Esophagus squamous epithelium (tissue), 5 donors: ENCODE measurements at regions of chr4 and their contacts with region 1.

Region 1: GRCh38 chr4:2761035-2761923 is 5.1 kb upstream of the TNIP2 start:
- DNase-seq: no peak
- H3K4me3 ChIP-seq: no peak overlapping the region
- H3K27ac ChIP-seq: peak overlapping the region in 1 of 4 donors; percentile 13
- H3K4me1 ChIP-seq: peaks cover 4 to 43% (median 18%) of the 10 kb centered on the region in 3 donors
- H3K27me3 ChIP-seq: no peaks in the 10 kb centered on the region
- CTCF ChIP-seq: peak in 2 of 6 experiments; percentile 9 to 38
- POLR2A ChIP-seq: no peak

Region 2: GRCh38 chr4:2837904-2838496 is 76.7 kb after region 1 on chr4:
- intact Hi-C with region 1: loop called (anchors 10 kb)
- DNase-seq: no peak
- H3K4me3 ChIP-seq: peak overlapping the region in 2 of 4 donors; percentile 13 to 15
- H3K27ac ChIP-seq: peak overlapping the region; percentile 56 to 72 (median 66)
- H3K4me1 ChIP-seq: peaks cover 10 to 53% (median 22%) of the 10 kb centered on the region in 3 donors
- H3K27me3 ChIP-seq: no peaks in the 10 kb centered on the region
- CTCF ChIP-seq: no peak
- POLR2A ChIP-seq: no peak

Region 3: GRCh38 chr4:2934813-2935761 is 173.8 kb after region 1 on chr4:
- intact Hi-C with region 1: loop called (anchors 5 kb)
- DNase-seq: peak; percentile 70
- H3K4me3 ChIP-seq: peak overlapping the region; percentile 86 to 97 (median 91)
- H3K27ac ChIP-seq: peak overlapping the region; percentile 93 to 98 (median 95)
- H3K4me1 ChIP-seq: peaks cover 35 to 81% (median 49%) of the 10 kb centered on the region in 3 donors
- H3K27me3 ChIP-seq: no peaks in the 10 kb centered on the region
- CTCF ChIP-seq: peak in 3 of 6 experiments; percentile 22 to 31 (median 25)
- POLR2A ChIP-seq: peak; percentile 31 to 99 (median 92)

Region 4: DNA sequence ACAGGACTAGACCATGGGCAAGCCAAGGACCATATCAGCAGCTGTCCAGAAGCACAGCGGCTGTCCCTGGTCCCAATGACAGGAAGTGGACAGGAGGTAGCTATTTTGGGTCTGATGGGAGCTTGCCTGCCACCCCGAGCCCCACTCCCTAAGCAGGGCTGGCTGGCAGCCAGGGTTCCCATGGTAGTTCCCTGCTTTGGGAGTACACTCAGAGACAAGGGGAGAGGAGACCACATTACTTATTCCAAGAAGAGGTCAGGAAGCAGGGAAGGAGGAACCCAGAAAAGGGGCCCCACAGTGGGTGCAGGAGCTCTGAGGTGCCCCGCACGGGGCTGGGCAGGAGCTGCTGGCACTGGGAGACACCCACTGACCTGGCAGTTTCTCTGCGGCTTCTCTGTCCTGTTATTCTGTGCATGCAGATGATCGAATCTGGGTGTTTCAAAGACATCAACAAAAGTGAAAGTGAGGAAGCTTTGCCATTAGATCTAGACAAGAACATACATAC is 276.7 kb after region 1 on chr4:
- intact Hi-C with region 1: loop called (anchors 10 kb)
- DNase-seq: no peak
- H3K4me3 ChIP-seq: peak overlapping the region in 3 of 4 donors; percentile 17 to 47 (median 19)
- H3K27ac ChIP-seq: no peak overlapping the region
- H3K4me1 ChIP-seq: peaks cover 18 to 41% (median 28%) of the 10 kb centered on the region in 3 donors
- H3K27me3 ChIP-seq: peaks cover 0 to 15% (median 0%) of the 10 kb centered on the region in 4 donors
- CTCF ChIP-seq: no peak
- POLR2A ChIP-seq: no peak